CD8-positive, alpha-beta T cell (primary cell): ENCODE measurements at regions of chr5 and their contacts with region 1.

Region 1: GRCh38 chr5:62305715-62306322 is at the start of gene KIF2A:
- DNase-seq: peak; percentile 81 to 97 (median 91)
- ATAC-seq: peak; percentile 83
- H3K4me3 ChIP-seq: peak within 1 kb of the TSS; percentile 52 to 66
- H3K4me3 Mint-ChIP-seq: peak within 1 kb of the TSS; percentile 97
- H3K27ac ChIP-seq: peak within 1 kb of the TSS; percentile 69 to 95
- H3K27ac Mint-ChIP-seq: peak within 1 kb of the TSS; percentile 99
- H3K4me1 ChIP-seq: peaks cover 39% of the 10 kb centered on the region
- H3K4me1 Mint-ChIP-seq: peaks cover 52% of the 10 kb centered on the region
- H3K27me3 ChIP-seq: no peaks in the 10 kb centered on the region
- H3K27me3 Mint-ChIP-seq: no peaks in the 10 kb centered on the region
- CTCF ChIP-seq: no peak
- total RNA-seq, gene KIF2A: 93.1 to 98.3 TPM

Region 2: DNA sequence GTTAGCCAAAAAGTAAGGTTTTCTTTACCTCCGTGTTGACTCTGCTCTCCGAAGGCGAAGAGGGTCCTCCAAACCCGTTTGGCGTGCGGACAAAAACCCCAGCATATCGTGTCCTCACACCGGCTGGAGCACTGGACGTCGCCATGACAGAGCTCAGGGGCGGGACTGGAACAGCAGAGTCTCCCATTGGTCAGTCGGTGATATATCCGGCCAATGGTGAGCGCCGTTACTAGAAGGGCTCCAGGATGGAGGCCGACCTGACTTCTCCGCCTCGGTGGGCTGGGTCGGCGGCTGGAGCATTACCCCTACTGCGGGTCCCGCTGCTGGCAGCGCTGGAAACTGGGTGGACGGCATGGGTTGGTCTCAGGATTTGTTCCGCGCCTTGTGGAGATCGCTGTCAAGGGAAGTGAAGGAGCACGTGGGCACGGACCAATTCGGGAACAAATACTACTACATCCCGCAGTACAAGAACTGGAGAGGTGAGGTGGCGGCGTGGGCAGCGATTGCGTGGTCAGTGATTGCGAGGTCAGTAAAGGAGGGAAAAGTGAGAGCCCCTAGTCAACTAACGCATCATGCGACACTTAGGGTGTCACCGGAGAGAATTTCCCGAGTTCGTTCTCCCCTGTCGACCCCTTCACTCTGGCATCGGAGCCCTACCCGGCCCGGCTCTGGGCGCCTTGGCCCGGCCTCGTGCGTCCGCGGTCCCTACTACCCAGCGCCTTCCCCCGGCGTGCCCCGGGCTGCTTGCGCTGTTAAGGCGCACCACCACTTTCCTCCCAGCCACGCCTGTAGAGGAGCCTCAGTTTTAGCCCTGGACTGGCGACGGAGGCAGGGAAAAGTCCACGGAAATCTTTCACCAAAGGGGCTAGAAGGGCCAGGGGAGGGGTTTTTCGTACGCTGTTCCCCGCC is 1360.7 kb before region 1 on chr5 and contains the starts of genes ERCC8 and NDUFAF2:
- CTCF ChIA-PET with region 1: no interaction called
- POLR2A ChIA-PET with region 1: no interaction called
- intact Hi-C with region 1: loop called in 1 of 2 experiments (anchors 10 kb)
- DNase-seq: peak; percentile 77 to 93 (median 87)
- ATAC-seq: peak; percentile 98
- H3K4me3 ChIP-seq: peak within 1 kb of the TSS; percentile 67 to 90
- H3K4me3 Mint-ChIP-seq: no peak within 1 kb of the TSS
- H3K27ac ChIP-seq: peak within 1 kb of the TSS; percentile 64 to 74
- H3K27ac Mint-ChIP-seq: no peak within 1 kb of the TSS
- H3K4me1 ChIP-seq: peaks cover 23% of the 10 kb centered on the region
- H3K4me1 Mint-ChIP-seq: peaks cover 30% of the 10 kb centered on the region
- H3K27me3 ChIP-seq: no peaks in the 10 kb centered on the region
- H3K27me3 Mint-ChIP-seq: no peaks in the 10 kb centered on the region
- CTCF ChIP-seq: no peak
- total RNA-seq, gene ERCC8: 2.5 to 3.0 TPM
- total RNA-seq, gene NDUFAF2: 5.8 to 7.1 TPM

Region 3: GRCh38 chr5:62190173-62190572 is 115.6 kb before region 1 on chr5:
- CTCF ChIA-PET with region 1: no interaction called
- POLR2A ChIA-PET with region 1: no interaction called
- intact Hi-C with region 1: no loop called
- DNase-seq: no peak
- ATAC-seq: no peak
- H3K4me3 ChIP-seq: no peak overlapping the region
- H3K4me3 Mint-ChIP-seq: no peak overlapping the region
- H3K27ac ChIP-seq: no peak overlapping the region
- H3K27ac Mint-ChIP-seq: no peak overlapping the region
- H3K4me1 ChIP-seq: no peaks in the 10 kb centered on the region
- H3K4me1 Mint-ChIP-seq: no peaks in the 10 kb centered on the region
- H3K27me3 ChIP-seq: peaks cover 0 to 3% of the 10 kb centered on the region in 2 experiments
- H3K27me3 Mint-ChIP-seq: peaks cover 12% of the 10 kb centered on the region
- CTCF ChIP-seq: no peak

Region 4: GRCh38 chr5:62231576-62231975 is 74.2 kb before region 1 on chr5:
- CTCF ChIA-PET with region 1: no interaction called
- POLR2A ChIA-PET with region 1: no interaction called
- intact Hi-C with region 1: loop called in 1 of 2 experiments (anchors 10 kb)
- DNase-seq: no peak
- ATAC-seq: no peak
- H3K4me3 ChIP-seq: no peak overlapping the region
- H3K4me3 Mint-ChIP-seq: no peak overlapping the region
- H3K27ac ChIP-seq: no peak overlapping the region
- H3K27ac Mint-ChIP-seq: no peak overlapping the region
- H3K4me1 ChIP-seq: no peaks in the 10 kb centered on the region
- H3K4me1 Mint-ChIP-seq: no peaks in the 10 kb centered on the region
- H3K27me3 ChIP-seq: no peaks in the 10 kb centered on the region
- H3K27me3 Mint-ChIP-seq: no peaks in the 10 kb centered on the region
- CTCF ChIP-seq: no peak

Region 5: GRCh38 chr5:62284946-62285891 is 20.6 kb before region 1 on chr5:
- CTCF ChIA-PET with region 1: interaction called, 12 read pairs
- POLR2A ChIA-PET with region 1: interaction called, 4 read pairs
- intact Hi-C with region 1: no loop called
- DNase-seq: peak in 3 of 9 experiments; percentile 30 to 66 (median 64)
- ATAC-seq: peak; percentile 55
- H3K4me3 ChIP-seq: no peak overlapping the region
- H3K4me3 Mint-ChIP-seq: no peak overlapping the region
- H3K27ac ChIP-seq: peak overlapping the region in 1 of 2 experiments; percentile 22
- H3K27ac Mint-ChIP-seq: peak overlapping the region; percentile 37
- H3K4me1 ChIP-seq: peaks cover 15% of the 10 kb centered on the region
- H3K4me1 Mint-ChIP-seq: peaks cover 49% of the 10 kb centered on the region
- H3K27me3 ChIP-seq: no peaks in the 10 kb centered on the region
- H3K27me3 Mint-ChIP-seq: no peaks in the 10 kb centered on the region
- CTCF ChIP-seq: no peak

Region 6: GRCh38 chr5:62340392-62340791 is 34.6 kb after region 1 on chr5:
- CTCF ChIA-PET with region 1: interaction called, 3 read pairs
- POLR2A ChIA-PET with region 1: interaction called, 4 read pairs
- intact Hi-C with region 1: loop called in 1 of 2 experiments (anchors 1 kb)
- DNase-seq: peak in 2 of 9 experiments; percentile 51 to 72
- ATAC-seq: peak; percentile 34
- H3K4me3 ChIP-seq: no peak overlapping the region
- H3K4me3 Mint-ChIP-seq: no peak overlapping the region
- H3K27ac ChIP-seq: no peak overlapping the region
- H3K27ac Mint-ChIP-seq: peak overlapping the region; percentile 21
- H3K4me1 ChIP-seq: peaks cover 27% of the 10 kb centered on the region
- H3K4me1 Mint-ChIP-seq: peaks cover 61% of the 10 kb centered on the region
- H3K27me3 ChIP-seq: no peaks in the 10 kb centered on the region
- H3K27me3 Mint-ChIP-seq: no peaks in the 10 kb centered on the region
- CTCF ChIP-seq: peak; percentile 8

Region 7: GRCh38 chr5:62385131-62385530 is 79.3 kb after region 1 on chr5:
- CTCF ChIA-PET with region 1: no interaction called
- POLR2A ChIA-PET with region 1: no interaction called
- intact Hi-C with region 1: no loop called
- DNase-seq: no peak
- ATAC-seq: no peak
- H3K4me3 ChIP-seq: no peak overlapping the region
- H3K4me3 Mint-ChIP-seq: no peak overlapping the region
- H3K27ac ChIP-seq: no peak overlapping the region
- H3K27ac Mint-ChIP-seq: peak overlapping the region; percentile 37
- H3K4me1 ChIP-seq: no peaks in the 10 kb centered on the region
- H3K4me1 Mint-ChIP-seq: peaks cover 5% of the 10 kb centered on the region
- H3K27me3 ChIP-seq: no peaks in the 10 kb centered on the region
- H3K27me3 Mint-ChIP-seq: no peaks in the 10 kb centered on the region
- CTCF ChIP-seq: no peak

Region 8: GRCh38 chr5:62403434-62404250 is 97.8 kb after region 1 on chr5 and contains the start of gene DIMT1:
- CTCF ChIA-PET with region 1: no interaction called
- POLR2A ChIA-PET with region 1: interaction called, 19 read pairs
- intact Hi-C with region 1: loop called (anchors 1 to 5 kb)
- DNase-seq: peak; percentile 81 to 96 (median 91)
- ATAC-seq: peak; percentile 98
- H3K4me3 ChIP-seq: peak within 1 kb of the TSS; percentile 91 to 99
- H3K4me3 Mint-ChIP-seq: peak within 1 kb of the TSS; percentile 96
- H3K27ac ChIP-seq: peak within 1 kb of the TSS; percentile 94 to 95
- H3K27ac Mint-ChIP-seq: peak within 1 kb of the TSS; percentile 93
- H3K4me1 ChIP-seq: peaks cover 12% of the 10 kb centered on the region
- H3K4me1 Mint-ChIP-seq: peaks cover 30% of the 10 kb centered on the region
- H3K27me3 ChIP-seq: no peaks in the 10 kb centered on the region
- H3K27me3 Mint-ChIP-seq: no peaks in the 10 kb centered on the region
- CTCF ChIP-seq: no peak
- total RNA-seq, gene DIMT1: 22.8 to 23.7 TPM